ENCODE measurements at regions of chr3 and their contacts with region 1.

Region 1: DNA sequence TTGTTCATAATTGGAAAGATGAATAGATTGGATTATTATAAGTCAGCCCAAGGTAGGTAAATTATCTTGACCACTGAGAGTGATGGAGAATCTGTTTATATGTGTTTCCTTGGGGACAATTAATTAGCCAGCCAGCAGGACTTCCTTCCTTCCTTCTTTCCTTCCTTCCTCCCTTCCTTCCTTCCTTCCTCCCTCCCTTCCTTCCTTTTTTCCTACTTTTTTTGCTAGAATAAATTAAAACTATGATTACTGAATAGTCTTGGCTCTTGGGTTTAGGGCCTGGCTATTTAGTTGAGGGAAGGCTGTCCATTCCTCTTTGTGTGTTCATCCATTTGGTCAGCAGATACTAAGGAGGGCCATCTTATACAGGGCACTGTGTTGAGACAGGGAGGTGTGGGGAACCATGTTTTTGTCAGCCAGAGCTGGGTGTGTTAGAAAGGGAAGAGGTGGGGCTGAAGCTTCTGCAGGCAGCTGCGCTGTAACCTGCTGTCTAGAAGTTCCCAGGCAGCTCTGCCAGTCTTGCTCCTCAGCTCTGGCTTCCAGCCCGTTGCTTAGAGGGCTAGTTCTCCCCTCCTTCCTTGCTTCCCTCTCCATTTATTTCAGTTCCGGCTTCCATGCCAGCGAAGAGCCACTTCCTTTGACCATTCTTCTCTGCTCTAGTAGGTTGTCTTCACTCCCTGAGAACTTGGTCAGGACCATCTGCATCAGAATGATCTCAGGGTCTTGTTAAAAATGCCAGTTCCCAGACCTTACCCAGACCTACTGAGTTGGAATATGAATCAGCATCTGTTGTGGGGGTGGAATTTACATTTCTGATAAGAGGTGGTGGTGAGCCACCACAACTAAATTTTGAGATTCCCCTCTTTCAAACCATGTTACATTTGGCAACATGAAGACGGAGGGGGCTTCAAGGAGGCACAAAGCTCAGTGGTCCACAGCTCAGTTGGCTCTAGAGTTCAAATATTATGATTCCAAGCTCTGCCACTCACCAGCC is 113.9 kb downstream of the DGKG start:
- DNase-seq: no peak
- ATAC-seq: peak; percentile 55
- H3K4me3 Mint-ChIP-seq: no peak overlapping the region
- H3K27ac Mint-ChIP-seq: no peak overlapping the region
- H3K4me1 Mint-ChIP-seq: peaks cover 9% of the 10 kb centered on the region
- H3K27me3 Mint-ChIP-seq: peaks cover 21% of the 10 kb centered on the region
- CTCF ChIP-seq: no peak

Region 2: GRCh38 chr3:186220365-186220764 is 27.8 kb before region 1 on chr3:
- CTCF ChIA-PET with region 1: no interaction called
- POLR2A ChIA-PET with region 1: no interaction called
- intact Hi-C with region 1: no loop called
- DNase-seq: peak; percentile 15
- ATAC-seq: peak; percentile 43
- H3K4me3 Mint-ChIP-seq: no peak overlapping the region
- H3K27ac Mint-ChIP-seq: no peak overlapping the region
- H3K4me1 Mint-ChIP-seq: peaks cover 13% of the 10 kb centered on the region
- H3K27me3 Mint-ChIP-seq: peaks cover 8% of the 10 kb centered on the region
- CTCF ChIP-seq: no peak

Region 3: GRCh38 chr3:186235554-186235953 is 12.6 kb before region 1 on chr3:
- CTCF ChIA-PET with region 1: no interaction called
- POLR2A ChIA-PET with region 1: no interaction called
- intact Hi-C with region 1: no loop called
- DNase-seq: no peak
- ATAC-seq: peak; percentile 82
- H3K4me3 Mint-ChIP-seq: peak overlapping the region; percentile 43
- H3K27ac Mint-ChIP-seq: peak overlapping the region; percentile 68
- H3K4me1 Mint-ChIP-seq: peaks cover 8% of the 10 kb centered on the region
- H3K27me3 Mint-ChIP-seq: no peaks in the 10 kb centered on the region
- CTCF ChIP-seq: no peak

Region 4: GRCh38 chr3:186259612-186260383 is 11.7 kb after region 1 on chr3:
- CTCF ChIA-PET with region 1: interaction called, 11 read pairs
- POLR2A ChIA-PET with region 1: interaction called, 3 read pairs
- intact Hi-C with region 1: no loop called
- DNase-seq: peak; percentile 78
- ATAC-seq: peak; percentile 88
- H3K4me3 Mint-ChIP-seq: peak overlapping the region; percentile 15
- H3K27ac Mint-ChIP-seq: peak overlapping the region; percentile 56
- H3K4me1 Mint-ChIP-seq: peaks cover 20% of the 10 kb centered on the region
- H3K27me3 Mint-ChIP-seq: peaks cover 2% of the 10 kb centered on the region
- CTCF ChIP-seq: peak; percentile 71

Region 5: GRCh38 chr3:186625600-186626042 is 377.5 kb after region 1 on chr3:
- CTCF ChIA-PET with region 1: no interaction called
- POLR2A ChIA-PET with region 1: no interaction called
- intact Hi-C with region 1: no loop called
- DNase-seq: no peak
- ATAC-seq: no peak
- H3K4me3 Mint-ChIP-seq: no peak overlapping the region
- H3K27ac Mint-ChIP-seq: no peak overlapping the region
- H3K4me1 Mint-ChIP-seq: no peaks in the 10 kb centered on the region
- H3K27me3 Mint-ChIP-seq: peaks cover 6% of the 10 kb centered on the region
- CTCF ChIP-seq: no peak